Caco-2 (cell line): ENCODE measurements at regions of chr14 and their contacts with region 1.

Region 1: GRCh38 chr14:99480917-99481744 is at the start of gene CCNK:
- DNase-seq: peak; percentile 100
- H3K4me3 ChIP-seq: peak within 1 kb of the TSS; percentile 92
- H3K4me3 Mint-ChIP-seq: peak within 1 kb of the TSS; percentile 95
- H3K27ac Mint-ChIP-seq: peak within 1 kb of the TSS; percentile 100
- H3K4me1 ChIP-seq: peaks cover 13% of the 10 kb centered on the region; the same call in 1 of the 2 replicates
- H3K4me1 Mint-ChIP-seq: peaks cover 32% of the 10 kb centered on the region
- H3K27me3 ChIP-seq: no peaks in the 10 kb centered on the region
- H3K27me3 Mint-ChIP-seq: no peaks in the 10 kb centered on the region
- CTCF ChIP-seq: no peak
- total RNA-seq, gene CCNK: 95.4 and 104 TPM in 2 replicates

Region 2: GRCh38 chr14:99422228-99423010 is 58.7 kb before region 1 on chr14:
- CTCF ChIA-PET with region 1: no interaction called
- POLR2A ChIA-PET with region 1: interaction called, 10 read pairs
- intact Hi-C with region 1: loop called (anchors 2 kb)
- DNase-seq: peak; percentile 60 to 67
- H3K4me3 ChIP-seq: peak overlapping the region; percentile 11; the same call in 1 of the 2 replicates
- H3K4me3 Mint-ChIP-seq: peak overlapping the region; percentile 41
- H3K27ac Mint-ChIP-seq: peak overlapping the region; percentile 69
- H3K4me1 ChIP-seq: peaks cover 27% of the 10 kb centered on the region
- H3K4me1 Mint-ChIP-seq: peaks cover 30% of the 10 kb centered on the region
- H3K27me3 ChIP-seq: no peaks in the 10 kb centered on the region
- H3K27me3 Mint-ChIP-seq: no peaks in the 10 kb centered on the region
- CTCF ChIP-seq: no peak